ENCODE measurements at regions of chr10 and their contacts with region 1.

Region 1: GRCh38 chr10:69914398-69915214 is 112.9 kb downstream of the COL13A1 start:
- H3K4me3 Mint-ChIP-seq: no peak overlapping the region
- H3K27ac Mint-ChIP-seq: no peak overlapping the region
- H3K4me1 Mint-ChIP-seq: no peaks in the 10 kb centered on the region
- H3K27me3 Mint-ChIP-seq: peaks cover 18% of the 10 kb centered on the region

Region 2: DNA sequence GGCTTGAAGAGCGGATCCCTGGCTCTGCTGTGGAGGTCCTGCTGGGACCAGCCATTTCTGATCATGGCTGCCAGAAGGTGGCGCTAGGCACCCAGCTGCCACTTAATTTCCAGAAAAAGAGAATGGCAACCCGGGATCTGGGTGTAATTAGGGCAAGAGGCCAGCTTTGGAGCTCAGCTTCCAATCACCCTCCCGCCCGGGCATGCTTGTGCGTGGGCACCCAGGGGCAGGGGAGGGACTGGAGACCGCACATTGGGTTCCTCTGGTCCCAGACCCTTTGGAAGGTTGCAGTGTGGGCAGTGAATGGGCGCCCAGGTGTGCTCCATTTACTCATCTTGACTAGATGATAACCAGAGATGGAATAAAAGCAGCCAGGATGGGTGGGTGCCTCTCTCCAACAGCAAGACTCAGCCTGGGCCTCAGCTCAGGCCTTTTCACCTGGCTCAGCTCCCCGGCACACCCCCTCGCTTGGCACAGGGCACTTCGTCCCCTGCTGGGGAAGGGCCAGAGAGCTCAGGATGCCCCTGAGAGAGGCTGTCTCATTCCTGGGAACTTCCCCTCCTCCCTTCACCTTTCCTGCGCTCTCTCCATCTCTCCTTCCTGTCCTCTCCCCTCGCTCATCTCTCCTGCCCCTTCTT is 269.8 kb before region 1 on chr10:
- intact Hi-C with region 1: loop called (anchors 2 kb)
- H3K4me3 Mint-ChIP-seq: no peak overlapping the region
- H3K27ac Mint-ChIP-seq: no peak overlapping the region
- H3K4me1 Mint-ChIP-seq: no peaks in the 10 kb centered on the region
- H3K27me3 Mint-ChIP-seq: peaks cover 8% of the 10 kb centered on the region

Region 3: GRCh38 chr10:69742928-69743602 is 171.5 kb before region 1 on chr10:
- intact Hi-C with region 1: loop called (anchors 2 kb)
- H3K4me3 Mint-ChIP-seq: no peak overlapping the region
- H3K27ac Mint-ChIP-seq: no peak overlapping the region
- H3K4me1 Mint-ChIP-seq: no peaks in the 10 kb centered on the region
- H3K27me3 Mint-ChIP-seq: peaks cover 6% of the 10 kb centered on the region

Region 4: DNA sequence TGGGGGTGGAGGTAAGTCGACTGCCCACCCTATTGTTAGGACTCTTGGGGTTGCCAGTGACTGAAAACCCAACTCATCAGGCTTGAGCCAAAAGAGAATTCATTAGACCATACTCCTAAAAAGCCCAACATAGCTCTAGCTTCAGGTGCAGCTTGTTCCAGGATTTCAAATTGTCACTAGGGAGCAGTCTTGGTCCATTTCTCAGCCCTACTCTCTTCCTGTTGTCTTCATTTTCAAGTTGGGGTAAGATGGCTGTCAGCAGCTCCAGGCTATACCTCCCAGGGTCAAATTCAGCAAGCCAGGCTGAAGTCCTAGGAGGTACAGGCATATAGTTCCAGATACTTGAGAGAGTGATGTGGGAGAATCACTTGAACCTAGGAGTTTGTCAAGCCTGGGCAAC is 127.8 kb before region 1 on chr10:
- intact Hi-C with region 1: loop called (anchors 1 kb)
- H3K4me3 Mint-ChIP-seq: no peak overlapping the region
- H3K27ac Mint-ChIP-seq: no peak overlapping the region
- H3K4me1 Mint-ChIP-seq: no peaks in the 10 kb centered on the region
- H3K27me3 Mint-ChIP-seq: peaks cover 24% of the 10 kb centered on the region

Region 5: GRCh38 chr10:69957886-69958555 is 43.4 kb after region 1 on chr10:
- intact Hi-C with region 1: no loop called
- H3K4me3 Mint-ChIP-seq: no peak overlapping the region
- H3K27ac Mint-ChIP-seq: peak overlapping the region; percentile 35
- H3K4me1 Mint-ChIP-seq: peaks cover 62% of the 10 kb centered on the region
- H3K27me3 Mint-ChIP-seq: peaks cover 16% of the 10 kb centered on the region

Measured in dendritic cell treated with granulocyte-macrophage colony-stimulating factor and Interleukin-4, amounts not matched to agents 40 ng/mL and 50 ng/mL, for 4 days (primary cell).